Endothelial cell of umbilical vein (primary cell): ENCODE measurements at regions of chr11 and their contacts with region 1.

Region 1: GRCh38 chr11:122853971-122854446 is 15.7 kb downstream of the CRTAM start:
- DNase-seq: peak; percentile 78
- H3K4me3 ChIP-seq: no peak overlapping the region
- H3K27ac ChIP-seq: no peak overlapping the region
- H3K4me1 ChIP-seq: no peaks in the 10 kb centered on the region
- H3K27me3 ChIP-seq: peaks cover 0 to 3% of the 10 kb centered on the region in 2 experiments
- CTCF ChIP-seq: peak; percentile 47 to 63
- POLR2A ChIP-seq: no peak

Region 2: DNA sequence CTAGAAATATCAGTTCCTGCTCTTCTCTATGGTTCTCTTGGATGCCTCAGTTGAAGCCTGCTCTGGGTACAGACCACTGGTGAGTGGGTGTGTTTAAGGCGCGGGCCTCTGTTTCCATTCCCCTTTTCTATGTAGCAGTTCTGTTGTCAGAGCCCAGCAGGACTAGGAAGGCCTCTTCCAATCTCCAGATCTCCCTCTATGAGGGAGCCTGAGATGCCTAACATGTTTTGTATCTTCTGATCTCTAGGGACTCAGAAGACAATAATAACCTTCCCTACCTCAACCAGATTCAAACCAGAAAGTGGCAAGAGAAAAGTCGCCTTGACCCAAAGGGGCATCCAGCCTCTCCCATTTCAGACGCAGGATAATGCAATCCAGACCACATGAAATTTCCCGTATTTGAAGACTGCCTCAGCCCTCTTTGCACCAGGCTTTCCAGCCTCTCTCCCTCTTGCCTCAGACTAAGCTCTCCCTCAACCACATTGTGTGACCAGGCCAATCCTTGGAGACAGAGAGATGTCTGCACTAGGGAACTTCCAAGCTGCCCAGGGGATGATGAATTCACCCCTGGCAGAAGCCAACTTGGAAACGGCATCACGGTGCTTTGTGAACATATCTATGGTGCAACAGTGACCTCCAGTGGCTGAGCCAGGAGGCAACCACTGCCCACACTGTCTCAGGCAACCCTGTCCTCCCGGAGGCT is 348.6 kb before region 1 on chr11:
- CTCF ChIA-PET with region 1: no interaction called
- POLR2A ChIA-PET with region 1: no interaction called
- dilution Hi-C with region 1: no loop called
- intact Hi-C with region 1: no loop called
- DNase-seq: peak; percentile 77
- H3K4me3 ChIP-seq: no peak overlapping the region
- H3K27ac ChIP-seq: no peak overlapping the region
- H3K4me1 ChIP-seq: no peaks in the 10 kb centered on the region
- H3K27me3 ChIP-seq: peaks cover 2 to 6% of the 10 kb centered on the region in 2 experiments
- CTCF ChIP-seq: peak; percentile 83 to 84
- POLR2A ChIP-seq: no peak

Region 3: DNA sequence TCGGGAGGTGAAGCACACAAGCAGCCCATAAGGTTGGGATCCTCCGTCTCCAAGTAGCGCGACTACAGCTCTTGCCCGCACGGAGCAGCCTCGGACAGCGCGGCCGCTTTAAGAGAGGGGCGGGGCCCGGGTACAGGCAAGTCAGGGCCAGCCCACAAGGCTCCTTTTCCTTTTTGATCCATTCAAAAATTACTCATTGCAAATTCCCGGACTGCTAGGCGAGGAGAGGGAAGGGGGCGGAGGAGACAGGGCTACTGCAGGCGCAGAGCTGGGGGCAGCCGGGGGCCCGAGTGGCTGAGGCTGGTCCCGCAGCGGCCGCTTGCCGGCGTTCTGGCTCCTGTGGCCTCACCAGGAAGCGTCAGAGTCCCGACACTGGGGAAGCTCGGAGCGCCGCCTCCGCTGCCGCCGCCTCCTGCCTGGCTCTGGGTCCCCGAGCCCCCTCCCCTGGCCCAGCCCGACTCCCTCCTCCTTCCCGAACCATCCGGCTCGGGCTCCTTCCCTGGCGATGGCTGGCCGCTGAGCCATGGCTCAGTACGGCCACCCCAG is 198.4 kb before region 1 on chr11 and contains the start of gene UBASH3B:
- CTCF ChIA-PET with region 1: interaction called, 11 read pairs
- POLR2A ChIA-PET with region 1: no interaction called
- dilution Hi-C with region 1: no loop called
- intact Hi-C with region 1: no loop called
- DNase-seq: peak; percentile 90
- H3K4me3 ChIP-seq: peak within 1 kb of the TSS; percentile 47 to 74 (median 62)
- H3K27ac ChIP-seq: peak within 1 kb of the TSS; percentile 83
- H3K4me1 ChIP-seq: peaks cover 17% of the 10 kb centered on the region
- H3K27me3 ChIP-seq: no peaks in the 10 kb centered on the region
- CTCF ChIP-seq: no peak
- POLR2A ChIP-seq: peak; percentile 96
- total RNA-seq, gene UBASH3B: 38.1 and 38.8 TPM in 2 replicates

Region 4: GRCh38 chr11:122705398-122705797 is 148.6 kb before region 1 on chr11:
- CTCF ChIA-PET with region 1: no interaction called
- POLR2A ChIA-PET with region 1: no interaction called
- dilution Hi-C with region 1: no loop called
- intact Hi-C with region 1: no loop called
- DNase-seq: no peak
- H3K4me3 ChIP-seq: no peak overlapping the region
- H3K27ac ChIP-seq: no peak overlapping the region
- H3K4me1 ChIP-seq: peaks cover 27% of the 10 kb centered on the region
- H3K27me3 ChIP-seq: no peaks in the 10 kb centered on the region
- CTCF ChIP-seq: no peak
- POLR2A ChIP-seq: no peak

Region 5: GRCh38 chr11:122796128-122796717 is 57.8 kb before region 1 on chr11:
- CTCF ChIA-PET with region 1: interaction called, 61 read pairs
- POLR2A ChIA-PET with region 1: no interaction called
- dilution Hi-C with region 1: no loop called
- intact Hi-C with region 1: loop called (anchors 1 kb)
- DNase-seq: peak; percentile 42
- H3K4me3 ChIP-seq: no peak overlapping the region
- H3K27ac ChIP-seq: no peak overlapping the region
- H3K4me1 ChIP-seq: peaks cover 7% of the 10 kb centered on the region
- H3K27me3 ChIP-seq: no peaks in the 10 kb centered on the region
- CTCF ChIP-seq: peak; percentile 78 to 81
- POLR2A ChIP-seq: no peak

Region 6: GRCh38 chr11:122843281-122844141 is 10.5 kb before region 1 on chr11:
- CTCF ChIA-PET with region 1: interaction called, 13 read pairs
- POLR2A ChIA-PET with region 1: no interaction called
- dilution Hi-C with region 1: no loop called
- intact Hi-C with region 1: no loop called
- DNase-seq: no peak
- H3K4me3 ChIP-seq: no peak overlapping the region
- H3K27ac ChIP-seq: no peak overlapping the region
- H3K4me1 ChIP-seq: no peaks in the 10 kb centered on the region
- H3K27me3 ChIP-seq: peaks cover 2 to 10% of the 10 kb centered on the region in 2 experiments
- CTCF ChIP-seq: no peak
- POLR2A ChIP-seq: no peak

Region 7: GRCh38 chr11:123033895-123034294 is 179.9 kb after region 1 on chr11:
- CTCF ChIA-PET with region 1: interaction called, 10 read pairs
- POLR2A ChIA-PET with region 1: no interaction called
- dilution Hi-C with region 1: no loop called
- intact Hi-C with region 1: no loop called
- DNase-seq: peak; percentile 32
- H3K4me3 ChIP-seq: no peak overlapping the region
- H3K27ac ChIP-seq: no peak overlapping the region
- H3K4me1 ChIP-seq: no peaks in the 10 kb centered on the region
- H3K27me3 ChIP-seq: peaks cover 0 to 3% of the 10 kb centered on the region in 2 experiments
- CTCF ChIP-seq: peak; percentile 13 to 36
- POLR2A ChIP-seq: no peak

Region 8: GRCh38 chr11:123083623-123084029 is 229.6 kb after region 1 on chr11:
- CTCF ChIA-PET with region 1: no interaction called
- POLR2A ChIA-PET with region 1: no interaction called
- dilution Hi-C with region 1: no loop called
- intact Hi-C with region 1: no loop called
- DNase-seq: peak; percentile 96
- H3K4me3 ChIP-seq: no peak overlapping the region
- H3K27ac ChIP-seq: peak overlapping the region; percentile 74
- H3K4me1 ChIP-seq: peaks cover 15% of the 10 kb centered on the region
- H3K27me3 ChIP-seq: no peaks in the 10 kb centered on the region
- CTCF ChIP-seq: no peak
- POLR2A ChIP-seq: no peak